Activated CD4-positive, alpha-beta T cell treated with anti-CD3 and anti-CD28 coated beads for 36 hours (primary cell): ENCODE measurements at regions of chr2 and their contacts with region 1.

Region 1: GRCh38 chr2:197198890-197199289 is 111.7 kb downstream of the ANKRD44 start:
- DNase-seq: peak; percentile 93
- ATAC-seq: peak; percentile 93
- H3K4me3 Mint-ChIP-seq: peak overlapping the region; percentile 77
- H3K27ac Mint-ChIP-seq: peak overlapping the region; percentile 91
- H3K4me1 Mint-ChIP-seq: peaks cover 90% of the 10 kb centered on the region
- H3K27me3 Mint-ChIP-seq: no peaks in the 10 kb centered on the region

Region 2: GRCh38 chr2:196926562-196927375 is 272.1 kb before region 1 on chr2 and contains the start of gene PGAP1:
- CTCF ChIA-PET with region 1: no interaction called
- POLR2A ChIA-PET with region 1: no interaction called
- intact Hi-C with region 1: loop called in 1 of 2 experiments (anchors 5 kb)
- DNase-seq: peak; percentile 94
- ATAC-seq: peak; percentile 80
- H3K4me3 Mint-ChIP-seq: peak within 1 kb of the TSS; percentile 92
- H3K27ac Mint-ChIP-seq: peak within 1 kb of the TSS; percentile 99
- H3K4me1 Mint-ChIP-seq: peaks cover 31% of the 10 kb centered on the region
- H3K27me3 Mint-ChIP-seq: no peaks in the 10 kb centered on the region
- total RNA-seq, gene PGAP1: 22.2 to 25.1 TPM

Region 3: DNA sequence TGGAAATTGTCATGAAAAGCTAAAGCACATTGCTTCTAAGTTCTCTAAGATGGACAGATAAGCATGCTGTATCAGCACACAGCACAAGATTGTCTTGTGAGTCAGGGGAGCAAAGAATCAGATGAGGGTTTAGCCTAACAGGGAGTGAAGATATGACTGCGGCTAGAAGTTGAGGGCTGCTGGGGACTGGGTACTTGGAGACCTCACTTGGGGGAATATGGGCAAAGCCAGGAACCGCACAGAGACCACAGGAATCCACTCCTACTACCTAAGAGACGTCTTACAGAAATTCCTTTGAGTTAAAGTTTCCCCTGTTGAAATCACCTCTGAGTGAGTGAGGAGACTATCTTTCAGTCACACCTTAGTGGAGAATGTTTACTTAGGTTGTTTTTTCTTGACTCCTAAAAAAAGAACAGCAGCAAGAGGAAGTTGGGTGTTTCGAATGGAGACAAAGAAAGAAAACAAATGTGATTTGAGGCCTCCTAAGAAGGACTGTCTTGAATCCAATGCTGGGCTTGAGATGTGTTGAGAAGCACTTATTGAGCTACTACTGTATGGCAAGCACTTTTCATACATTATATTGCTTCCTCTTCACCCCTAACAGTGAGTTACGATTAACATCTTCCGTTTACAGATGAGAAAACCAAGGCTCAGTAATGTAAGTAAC is 11.0 kb after region 1 on chr2:
- CTCF ChIA-PET with region 1: interaction called, 29 read pairs
- POLR2A ChIA-PET with region 1: interaction called, 17 read pairs
- intact Hi-C with region 1: loop called (anchors 1 kb)
- DNase-seq: peak; percentile 82
- ATAC-seq: peak; percentile 64
- H3K4me3 Mint-ChIP-seq: peak overlapping the region; percentile 30
- H3K27ac Mint-ChIP-seq: peak overlapping the region; percentile 99
- H3K4me1 Mint-ChIP-seq: peaks cover 98% of the 10 kb centered on the region
- H3K27me3 Mint-ChIP-seq: no peaks in the 10 kb centered on the region

Region 4: GRCh38 chr2:197239434-197239833 is 40.5 kb after region 1 on chr2:
- CTCF ChIA-PET with region 1: interaction called, 11 read pairs
- POLR2A ChIA-PET with region 1: no interaction called
- intact Hi-C with region 1: loop called (anchors 2 kb)
- DNase-seq: no peak
- ATAC-seq: peak; percentile 59
- H3K4me3 Mint-ChIP-seq: peak overlapping the region; percentile 75
- H3K27ac Mint-ChIP-seq: peak overlapping the region; percentile 92
- H3K4me1 Mint-ChIP-seq: peaks cover 87% of the 10 kb centered on the region
- H3K27me3 Mint-ChIP-seq: no peaks in the 10 kb centered on the region

Region 5: GRCh38 chr2:197286805-197287598 is 88.1 kb after region 1 on chr2:
- CTCF ChIA-PET with region 1: no interaction called
- POLR2A ChIA-PET with region 1: no interaction called
- intact Hi-C with region 1: loop called in 1 of 2 experiments (anchors 2 kb)
- DNase-seq: peak; percentile 70
- ATAC-seq: peak; percentile 92
- H3K4me3 Mint-ChIP-seq: peak overlapping the region; percentile 65
- H3K27ac Mint-ChIP-seq: peak overlapping the region; percentile 100
- H3K4me1 Mint-ChIP-seq: peaks cover 81% of the 10 kb centered on the region
- H3K27me3 Mint-ChIP-seq: no peaks in the 10 kb centered on the region